ENCODE measurements at regions of chr3 and their contacts with region 1.

Region 1: GRCh38 chr3:120742198-120742849 is at the starts of genes GTF2E1 and RABL3:
- DNase-seq: peak; percentile 93 to 99 (median 97)
- ATAC-seq: peak; percentile 96
- H3K4me3 ChIP-seq: peak within 1 kb of the TSS; percentile 89 to 90
- H3K4me3 Mint-ChIP-seq: peak within 1 kb of the TSS; percentile 94
- H3K27ac ChIP-seq: peak within 1 kb of the TSS; percentile 97 to 98
- H3K27ac Mint-ChIP-seq: peak within 1 kb of the TSS; percentile 98
- H3K4me1 ChIP-seq: peaks cover 16% of the 10 kb centered on the region
- H3K4me1 Mint-ChIP-seq: peaks cover 49% of the 10 kb centered on the region
- H3K27me3 ChIP-seq: no peaks in the 10 kb centered on the region
- H3K27me3 Mint-ChIP-seq: no peaks in the 10 kb centered on the region
- CTCF ChIP-seq: no peak
- total RNA-seq, gene GTF2E1: 5.8 to 7.8 TPM
- total RNA-seq, gene RABL3: 14.0 to 15.2 TPM

Region 2: GRCh38 chr3:119293871-119294695 is 1448.2 kb before region 1 on chr3 and contains the start of gene ARHGAP31:
- CTCF ChIA-PET with region 1: no interaction called
- POLR2A ChIA-PET with region 1: no interaction called
- intact Hi-C with region 1: loop called in 1 of 2 experiments (anchors 2 kb)
- DNase-seq: peak; percentile 71 to 96 (median 86)
- ATAC-seq: peak; percentile 64
- H3K4me3 ChIP-seq: peak within 1 kb of the TSS; percentile 61 to 82
- H3K4me3 Mint-ChIP-seq: peak within 1 kb of the TSS; percentile 95
- H3K27ac ChIP-seq: peak within 1 kb of the TSS; percentile 58 to 84
- H3K27ac Mint-ChIP-seq: peak within 1 kb of the TSS; percentile 98
- H3K4me1 ChIP-seq: peaks cover 30% of the 10 kb centered on the region
- H3K4me1 Mint-ChIP-seq: peaks cover 55% of the 10 kb centered on the region
- H3K27me3 ChIP-seq: no peaks in the 10 kb centered on the region
- H3K27me3 Mint-ChIP-seq: no peaks in the 10 kb centered on the region
- CTCF ChIP-seq: no peak
- total RNA-seq, gene ARHGAP31: 1.00 to 1.1 TPM

Region 3: GRCh38 chr3:119498186-119498987 is 1243.9 kb before region 1 on chr3 and contains the start of gene TIMMDC1:
- CTCF ChIA-PET with region 1: no interaction called
- POLR2A ChIA-PET with region 1: no interaction called
- intact Hi-C with region 1: loop called in 1 of 2 experiments (anchors 10 kb)
- DNase-seq: peak; percentile 93 to 99 (median 98)
- ATAC-seq: peak; percentile 96
- H3K4me3 ChIP-seq: peak within 1 kb of the TSS; percentile 81 to 87
- H3K4me3 Mint-ChIP-seq: peak within 1 kb of the TSS; percentile 100
- H3K27ac ChIP-seq: peak within 1 kb of the TSS; percentile 92 to 95
- H3K27ac Mint-ChIP-seq: peak within 1 kb of the TSS; percentile 100
- H3K4me1 ChIP-seq: peaks cover 25% of the 10 kb centered on the region
- H3K4me1 Mint-ChIP-seq: peaks cover 40% of the 10 kb centered on the region
- H3K27me3 ChIP-seq: no peaks in the 10 kb centered on the region
- H3K27me3 Mint-ChIP-seq: no peaks in the 10 kb centered on the region
- CTCF ChIP-seq: no peak
- total RNA-seq, gene TIMMDC1: 12.1 to 16.8 TPM

Region 4: GRCh38 chr3:120708408-120708807 is 33.9 kb before region 1 on chr3:
- CTCF ChIA-PET with region 1: no interaction called
- POLR2A ChIA-PET with region 1: interaction called, 5 read pairs
- intact Hi-C with region 1: loop called in 1 of 2 experiments (anchors 5 kb)
- DNase-seq: no peak
- ATAC-seq: no peak
- H3K4me3 ChIP-seq: no peak overlapping the region
- H3K4me3 Mint-ChIP-seq: no peak overlapping the region
- H3K27ac ChIP-seq: no peak overlapping the region
- H3K27ac Mint-ChIP-seq: peak overlapping the region; percentile 4
- H3K4me1 ChIP-seq: no peaks in the 10 kb centered on the region
- H3K4me1 Mint-ChIP-seq: peaks cover 9% of the 10 kb centered on the region
- H3K27me3 ChIP-seq: no peaks in the 10 kb centered on the region
- H3K27me3 Mint-ChIP-seq: no peaks in the 10 kb centered on the region
- CTCF ChIP-seq: no peak

Region 5: GRCh38 chr3:120801484-120801883 is 59.2 kb after region 1 on chr3:
- CTCF ChIA-PET with region 1: no interaction called
- POLR2A ChIA-PET with region 1: no interaction called
- intact Hi-C with region 1: no loop called
- DNase-seq: no peak
- ATAC-seq: no peak
- H3K4me3 ChIP-seq: no peak overlapping the region
- H3K4me3 Mint-ChIP-seq: no peak overlapping the region
- H3K27ac ChIP-seq: no peak overlapping the region
- H3K27ac Mint-ChIP-seq: no peak overlapping the region
- H3K4me1 ChIP-seq: no peaks in the 10 kb centered on the region
- H3K4me1 Mint-ChIP-seq: no peaks in the 10 kb centered on the region
- H3K27me3 ChIP-seq: no peaks in the 10 kb centered on the region
- H3K27me3 Mint-ChIP-seq: peaks cover 2% of the 10 kb centered on the region
- CTCF ChIP-seq: no peak

Region 6: GRCh38 chr3:120894303-120894702 is 152.0 kb after region 1 on chr3:
- CTCF ChIA-PET with region 1: no interaction called
- POLR2A ChIA-PET with region 1: no interaction called
- intact Hi-C with region 1: no loop called
- DNase-seq: no peak
- ATAC-seq: no peak
- H3K4me3 ChIP-seq: no peak overlapping the region
- H3K4me3 Mint-ChIP-seq: no peak overlapping the region
- H3K27ac ChIP-seq: no peak overlapping the region
- H3K27ac Mint-ChIP-seq: no peak overlapping the region
- H3K4me1 ChIP-seq: no peaks in the 10 kb centered on the region
- H3K4me1 Mint-ChIP-seq: no peaks in the 10 kb centered on the region
- H3K27me3 ChIP-seq: no peaks in the 10 kb centered on the region
- H3K27me3 Mint-ChIP-seq: peaks cover 5% of the 10 kb centered on the region
- CTCF ChIP-seq: no peak

Region 7: DNA sequence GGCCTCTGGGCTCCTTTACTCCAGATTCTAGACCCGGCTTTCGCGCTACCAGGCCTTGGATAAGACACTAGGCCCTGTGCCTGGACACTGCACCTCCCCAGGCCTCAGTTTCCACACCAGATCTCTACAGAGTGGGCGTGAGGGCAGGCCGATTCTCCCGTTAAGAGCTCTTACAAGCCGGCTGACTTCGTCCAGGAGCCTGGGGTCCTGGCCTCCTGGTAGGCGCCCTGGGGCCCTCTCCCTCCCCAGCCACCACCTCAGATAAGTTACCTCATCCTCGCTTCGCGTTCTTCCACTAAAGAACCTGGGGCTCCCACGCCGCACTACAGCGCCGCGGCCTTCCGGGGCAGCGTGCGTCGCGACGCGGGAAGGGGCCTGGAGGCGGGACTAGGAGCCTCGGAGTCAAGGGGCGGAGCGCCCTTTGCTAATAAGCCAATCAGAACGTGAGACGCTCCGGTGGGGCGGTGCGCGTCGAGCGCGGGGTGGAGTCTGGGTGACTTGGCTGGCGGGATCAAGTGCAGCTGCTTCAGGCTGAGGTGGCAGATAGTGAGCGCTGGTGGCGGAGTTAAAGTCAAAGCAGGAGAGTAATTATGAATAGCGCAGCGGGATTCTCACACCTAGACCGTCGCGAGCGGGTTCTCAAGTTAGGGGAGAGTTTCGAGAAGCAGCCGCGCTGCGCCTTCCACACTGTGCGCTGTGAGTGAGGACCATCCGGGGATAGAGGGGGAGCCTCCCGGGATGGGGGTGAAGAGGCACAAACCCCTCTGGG is 1092.6 kb after region 1 on chr3 and contains the starts of genes EAF2 and IQCB1:
- CTCF ChIA-PET with region 1: no interaction called
- POLR2A ChIA-PET with region 1: no interaction called
- intact Hi-C with region 1: loop called (anchors 10 kb)
- DNase-seq: peak; percentile 91 to 98 (median 95)
- ATAC-seq: peak; percentile 97
- H3K4me3 ChIP-seq: peak within 1 kb of the TSS; percentile 74 to 91
- H3K4me3 Mint-ChIP-seq: peak within 1 kb of the TSS; percentile 93
- H3K27ac ChIP-seq: peak within 1 kb of the TSS; percentile 82 to 87
- H3K27ac Mint-ChIP-seq: peak within 1 kb of the TSS; percentile 94
- H3K4me1 ChIP-seq: peaks cover 25% of the 10 kb centered on the region
- H3K4me1 Mint-ChIP-seq: peaks cover 53% of the 10 kb centered on the region
- H3K27me3 ChIP-seq: no peaks in the 10 kb centered on the region
- H3K27me3 Mint-ChIP-seq: no peaks in the 10 kb centered on the region
- CTCF ChIP-seq: no peak
- total RNA-seq, gene EAF2: 3.5 to 3.7 TPM
- total RNA-seq, gene IQCB1: 36.5 to 42.2 TPM

Measured in CD8-positive, alpha-beta T cell (primary cell).